ENCODE measurements at regions of chr1 and their contacts with region 1.

Region 1: GRCh38 chr1:207711285-207711684 is 40.6 kb upstream of the CD46 start:
- DNase-seq: no peak
- ATAC-seq: no peak
- H3K4me3 ChIP-seq: no peak overlapping the region
- H3K27ac ChIP-seq: no peak overlapping the region
- H3K4me1 ChIP-seq: no peaks in the 10 kb centered on the region
- H3K27me3 ChIP-seq: no peaks in the 10 kb centered on the region
- CTCF ChIP-seq: no peak
- POLR2A ChIP-seq: no peak

Region 2: GRCh38 chr1:207797229-207797961 is 86.1 kb after region 1 on chr1:
- intact Hi-C with region 1: loop called in 1 of 10 experiments (anchors 5 kb)
- DNase-seq: peak in 4 of 5 donors; percentile 80 to 85 (median 80)
- ATAC-seq: peak; percentile 54 to 80 (median 76)
- H3K4me3 ChIP-seq: no peak overlapping the region
- H3K27ac ChIP-seq: peak overlapping the region in 5 of 12 donors; percentile 21 to 55 (median 26)
- H3K4me1 ChIP-seq: peaks cover 0 to 24% (median 2%) of the 10 kb centered on the region in 12 donors
- H3K27me3 ChIP-seq: no peaks in the 10 kb centered on the region
- CTCF ChIP-seq: peak; percentile 66 to 89 (median 82)
- POLR2A ChIP-seq: no peak

Region 3: GRCh38 chr1:207885129-207886032 is 174.1 kb after region 1 on chr1:
- intact Hi-C with region 1: no loop called
- DNase-seq: peak; percentile 85 to 91 (median 87)
- ATAC-seq: peak; percentile 84 to 93 (median 90)
- H3K4me3 ChIP-seq: no peak overlapping the region
- H3K27ac ChIP-seq: peak overlapping the region in 11 of 12 donors; percentile 51 to 91 (median 74)
- H3K4me1 ChIP-seq: peaks cover 16 to 84% (median 56%) of the 10 kb centered on the region in 12 donors
- H3K27me3 ChIP-seq: no peaks in the 10 kb centered on the region
- CTCF ChIP-seq: peak; percentile 93 to 98 (median 96)
- POLR2A ChIP-seq: peak in 1 of 2 donors; percentile 10

Region 4: DNA sequence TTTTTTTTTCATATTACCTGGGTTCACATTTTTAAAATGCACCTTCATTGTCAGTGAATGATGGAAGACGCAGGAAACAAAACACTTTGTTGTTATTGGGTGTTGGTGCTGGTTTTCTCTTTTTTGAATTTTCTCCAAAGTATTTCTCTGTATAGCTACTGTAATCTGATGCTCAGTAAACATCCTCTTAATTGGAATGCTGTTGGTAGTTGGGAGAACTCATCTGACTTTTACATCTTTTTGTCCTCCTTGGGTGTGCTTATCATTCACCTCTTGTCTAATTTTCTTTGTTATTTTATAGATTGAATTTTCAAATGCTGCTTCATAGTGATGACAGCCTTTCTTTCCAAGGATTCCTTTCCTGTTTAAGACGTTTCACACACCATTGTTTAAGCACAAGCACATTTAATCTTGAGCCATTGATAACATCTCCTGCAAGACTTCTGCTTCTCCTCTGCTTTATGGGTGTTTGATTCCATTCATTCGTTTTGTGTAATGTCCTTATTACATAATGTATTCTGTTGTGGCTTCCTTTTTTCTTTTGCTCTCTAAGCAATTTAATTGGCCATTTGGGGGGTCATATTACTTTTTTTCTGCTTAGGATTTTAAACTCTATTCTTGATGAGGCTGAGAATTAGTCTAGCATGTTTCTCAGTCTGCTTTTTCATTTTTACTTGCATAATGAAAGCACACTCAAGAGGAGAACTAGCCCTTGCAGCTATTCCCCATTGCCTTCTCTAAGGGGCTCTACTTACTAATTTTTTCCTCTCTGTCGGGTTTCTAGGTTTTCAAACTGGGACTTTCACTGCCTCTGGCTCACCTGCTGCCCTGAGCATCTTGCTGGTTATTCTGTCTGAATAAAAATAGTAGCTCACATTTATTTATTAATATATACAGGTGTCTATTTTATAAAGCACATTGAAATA is 241.6 kb after region 1 on chr1:
- intact Hi-C with region 1: no loop called
- DNase-seq: no peak
- ATAC-seq: no peak
- H3K4me3 ChIP-seq: no peak overlapping the region
- H3K27ac ChIP-seq: no peak overlapping the region
- H3K4me1 ChIP-seq: peaks cover 0 to 38% (median 8%) of the 10 kb centered on the region in 12 donors
- H3K27me3 ChIP-seq: no peaks in the 10 kb centered on the region
- CTCF ChIP-seq: no peak
- POLR2A ChIP-seq: no peak

Measured in heart left ventricle (tissue), 16 donors.